ENCODE measurements at regions of chr1 and their contacts with region 1.

Region 1: DNA sequence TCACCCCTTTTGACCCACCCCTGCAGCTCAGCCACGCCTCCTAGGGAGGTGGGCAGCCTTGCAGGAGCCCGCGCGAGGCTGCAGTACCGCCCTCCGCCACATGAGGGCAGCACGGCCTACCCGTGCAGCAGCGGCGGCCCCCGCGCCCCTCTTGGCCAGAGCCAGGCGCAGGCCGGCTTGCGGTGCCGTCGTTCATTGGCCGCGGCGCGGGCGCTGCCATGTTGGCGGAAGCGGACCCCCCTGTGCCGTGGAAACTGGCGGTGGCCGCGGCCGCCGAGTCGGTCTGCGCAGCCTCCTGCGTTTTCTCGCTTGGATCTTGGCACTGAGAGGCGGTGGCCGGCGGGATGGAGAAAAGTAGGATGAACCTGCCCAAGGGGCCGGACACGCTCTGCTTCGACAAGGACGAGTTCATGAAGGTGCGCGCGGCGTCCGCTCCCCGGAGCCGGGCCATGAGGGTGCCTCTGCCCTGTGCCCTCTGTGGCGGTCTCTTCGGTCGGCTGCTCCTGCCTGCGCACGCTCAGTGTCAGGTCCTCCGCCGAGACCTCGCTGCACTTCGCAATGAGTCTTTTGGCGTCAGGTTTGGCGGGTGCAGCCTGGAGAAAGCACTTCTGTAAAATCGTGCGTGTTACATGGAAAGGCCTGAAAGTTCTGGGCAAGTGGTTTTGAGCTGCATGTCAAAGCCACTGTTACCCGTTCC is at the start of gene COG2:
- DNase-seq: peak; percentile 97
- H3K4me3 Mint-ChIP-seq: peak within 1 kb of the TSS; percentile 96
- H3K27ac Mint-ChIP-seq: peak within 1 kb of the TSS; percentile 83
- H3K4me1 Mint-ChIP-seq: peaks cover 23% of the 10 kb centered on the region
- H3K27me3 Mint-ChIP-seq: peaks cover 26% of the 10 kb centered on the region
- CTCF ChIP-seq: peak; percentile 100
- total RNA-seq, gene COG2: 39.5 and 46.7 TPM in 2 replicates

Region 2: GRCh38 chr1:230632273-230632873 is 10.0 kb before region 1 on chr1:
- CTCF ChIA-PET with region 1: interaction called, 15 read pairs
- POLR2A ChIA-PET with region 1: interaction called, 6 read pairs
- intact Hi-C with region 1: no loop called
- DNase-seq: peak; percentile 88
- H3K4me3 Mint-ChIP-seq: no peak overlapping the region
- H3K27ac Mint-ChIP-seq: no peak overlapping the region
- H3K4me1 Mint-ChIP-seq: peaks cover 4% of the 10 kb centered on the region
- H3K27me3 Mint-ChIP-seq: peaks cover 17% of the 10 kb centered on the region
- CTCF ChIP-seq: peak; percentile 84

Region 3: DNA sequence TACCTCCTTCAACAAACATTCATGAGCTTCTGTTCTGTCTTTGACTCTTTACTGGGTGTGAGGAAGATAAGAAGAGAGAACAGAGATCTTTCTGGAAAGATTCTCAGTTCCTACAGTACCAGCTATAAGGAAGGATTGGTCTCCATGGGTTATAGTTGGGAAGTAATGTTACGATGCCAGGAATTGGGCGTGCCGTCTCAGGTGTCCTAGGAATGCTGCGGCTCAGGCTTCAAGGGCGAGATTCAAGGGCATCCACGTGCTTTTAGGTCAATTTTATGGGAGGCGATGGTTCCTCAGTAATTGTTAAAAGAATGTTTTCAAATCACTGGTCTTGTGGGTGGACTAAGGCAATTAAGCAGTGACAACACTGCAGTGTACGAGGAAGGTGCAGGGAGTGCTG is 27.1 kb after region 1 on chr1:
- CTCF ChIA-PET with region 1: interaction called, 11 read pairs
- POLR2A ChIA-PET with region 1: interaction called, 4 read pairs
- intact Hi-C with region 1: no loop called
- DNase-seq: no peak
- H3K4me3 Mint-ChIP-seq: no peak overlapping the region
- H3K27ac Mint-ChIP-seq: no peak overlapping the region
- H3K4me1 Mint-ChIP-seq: no peaks in the 10 kb centered on the region
- H3K27me3 Mint-ChIP-seq: no peaks in the 10 kb centered on the region
- CTCF ChIP-seq: no peak

Region 4: DNA sequence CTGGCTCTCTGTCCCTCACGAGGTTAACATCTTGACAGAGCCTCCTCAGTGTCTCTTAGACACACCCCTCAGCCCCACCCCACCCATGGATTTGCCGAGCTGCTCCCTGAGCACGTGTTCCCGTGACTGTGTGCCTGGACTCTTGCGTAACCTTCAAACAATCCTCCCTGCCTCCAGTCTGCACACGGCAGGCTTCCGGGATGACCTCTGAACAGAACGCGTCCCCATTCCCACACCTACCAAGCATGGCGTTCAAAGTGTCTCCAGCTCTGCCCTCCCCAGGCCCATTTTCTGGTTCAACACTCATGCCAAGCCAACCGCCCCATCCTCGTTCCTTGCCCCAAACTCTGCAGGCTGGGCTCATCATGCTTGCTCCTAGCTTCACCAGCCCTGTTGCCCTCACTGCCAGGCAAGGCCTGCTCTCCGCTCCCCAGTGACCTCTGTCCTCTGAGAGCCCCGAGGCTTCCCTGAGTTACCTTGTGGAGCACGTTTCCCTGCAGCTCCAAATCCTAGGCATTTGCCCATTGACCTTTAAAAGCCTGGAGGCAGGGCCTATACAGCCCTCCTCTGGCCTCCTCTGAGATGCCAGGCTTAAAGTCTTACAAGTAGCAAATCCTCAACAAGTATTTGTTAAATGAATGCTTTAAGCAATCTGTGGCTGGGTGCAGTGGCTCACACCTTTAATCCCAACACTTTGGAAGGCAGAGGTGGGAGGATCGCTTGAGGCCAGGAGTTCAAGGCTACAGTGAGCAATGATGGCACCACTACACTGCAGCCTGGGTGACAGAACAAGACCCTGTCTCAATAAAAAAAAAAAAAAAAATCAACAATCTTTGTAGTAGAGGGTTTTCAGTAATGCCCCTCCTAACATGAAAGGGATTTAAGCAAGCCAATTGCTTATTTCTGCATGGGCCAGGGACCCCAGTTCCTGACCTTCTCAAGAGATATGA is 66.5 kb after region 1 on chr1:
- CTCF ChIA-PET with region 1: no interaction called
- POLR2A ChIA-PET with region 1: no interaction called
- intact Hi-C with region 1: no loop called
- DNase-seq: peak; percentile 95
- H3K4me3 Mint-ChIP-seq: no peak overlapping the region
- H3K27ac Mint-ChIP-seq: no peak overlapping the region
- H3K4me1 Mint-ChIP-seq: peaks cover 14% of the 10 kb centered on the region
- H3K27me3 Mint-ChIP-seq: no peaks in the 10 kb centered on the region
- CTCF ChIP-seq: no peak

Region 5: GRCh38 chr1:230772457-230773395 is 130.3 kb after region 1 on chr1:
- CTCF ChIA-PET with region 1: interaction called, 12 read pairs
- POLR2A ChIA-PET with region 1: interaction called, 11 read pairs
- intact Hi-C with region 1: loop called (anchors 1 kb)
- DNase-seq: peak; percentile 72
- H3K4me3 Mint-ChIP-seq: no peak overlapping the region
- H3K27ac Mint-ChIP-seq: no peak overlapping the region
- H3K4me1 Mint-ChIP-seq: peaks cover 7% of the 10 kb centered on the region
- H3K27me3 Mint-ChIP-seq: no peaks in the 10 kb centered on the region
- CTCF ChIP-seq: peak; percentile 54

Measured in MCF 10A (cell line).